ENCODE measurements at regions of chr2 and their contacts with region 1.

Region 1: DNA sequence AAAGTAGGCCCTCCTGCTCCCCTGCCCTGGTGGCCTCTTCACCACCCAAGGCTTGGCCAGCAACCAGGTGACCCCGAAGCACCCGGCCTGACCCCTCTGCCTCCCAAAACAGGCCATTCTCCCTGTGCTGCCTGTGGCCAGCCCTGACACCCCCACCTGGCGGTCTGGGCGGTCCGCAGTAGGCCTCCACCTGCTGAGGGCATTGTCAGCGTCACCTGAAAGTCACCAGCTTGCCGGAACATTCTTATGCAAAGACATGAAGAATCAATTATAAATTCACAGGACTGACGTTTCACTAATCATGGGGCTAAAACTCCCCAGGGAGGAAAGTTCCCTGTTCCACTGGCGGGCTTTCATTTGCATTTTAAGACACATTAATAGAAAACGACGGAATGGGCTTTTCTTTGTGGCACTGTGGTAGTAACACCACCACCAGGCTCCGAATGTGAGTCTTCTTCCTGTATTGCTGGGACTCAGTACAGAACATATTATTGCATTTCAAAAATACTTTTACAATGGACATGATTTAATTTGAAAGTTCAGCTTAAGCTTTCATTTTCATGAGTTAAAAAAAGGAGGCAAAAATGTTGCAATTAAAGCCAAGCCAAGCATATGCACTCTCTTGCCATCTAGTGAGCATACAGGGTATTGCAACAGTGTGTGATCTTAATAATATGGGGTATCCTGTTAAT is 57.4 kb downstream of the ADI1 start:
- DNase-seq: peak; percentile 89
- H3K4me3 ChIP-seq: no peak overlapping the region; a peak in 1 of 4 replicates
- H3K27ac ChIP-seq: peak overlapping the region in 1 of 2 experiments; percentile 43; a peak in 2 of 4 replicates
- H3K4me1 ChIP-seq: peaks cover 16 to 22% of the 10 kb centered on the region in 2 experiments; a peak in 3 of 4 replicates
- H3K27me3 ChIP-seq: no peaks in the 10 kb centered on the region
- CTCF ChIP-seq: peak; percentile 98
- EP300 ChIP-seq: no peak
- RAD21 ChIP-seq: peak; percentile 89

Region 2: GRCh38 chr2:3433339-3433699 is 28.6 kb before region 1 on chr2:
- CTCF ChIA-PET with region 1: interaction called, 132 read pairs
- POLR2A ChIA-PET with region 1: interaction called, 3 read pairs
- DNase-seq: no peak
- H3K4me3 ChIP-seq: no peak overlapping the region
- H3K27ac ChIP-seq: peak overlapping the region in 1 of 2 experiments; percentile 58; a peak in 2 of 4 replicates
- H3K4me1 ChIP-seq: peaks cover 5 to 28% of the 10 kb centered on the region in 2 experiments; a peak in 2 of 4 replicates
- H3K27me3 ChIP-seq: no peaks in the 10 kb centered on the region
- CTCF ChIP-seq: no peak
- EP300 ChIP-seq: no peak
- RAD21 ChIP-seq: no peak

Region 3: DNA sequence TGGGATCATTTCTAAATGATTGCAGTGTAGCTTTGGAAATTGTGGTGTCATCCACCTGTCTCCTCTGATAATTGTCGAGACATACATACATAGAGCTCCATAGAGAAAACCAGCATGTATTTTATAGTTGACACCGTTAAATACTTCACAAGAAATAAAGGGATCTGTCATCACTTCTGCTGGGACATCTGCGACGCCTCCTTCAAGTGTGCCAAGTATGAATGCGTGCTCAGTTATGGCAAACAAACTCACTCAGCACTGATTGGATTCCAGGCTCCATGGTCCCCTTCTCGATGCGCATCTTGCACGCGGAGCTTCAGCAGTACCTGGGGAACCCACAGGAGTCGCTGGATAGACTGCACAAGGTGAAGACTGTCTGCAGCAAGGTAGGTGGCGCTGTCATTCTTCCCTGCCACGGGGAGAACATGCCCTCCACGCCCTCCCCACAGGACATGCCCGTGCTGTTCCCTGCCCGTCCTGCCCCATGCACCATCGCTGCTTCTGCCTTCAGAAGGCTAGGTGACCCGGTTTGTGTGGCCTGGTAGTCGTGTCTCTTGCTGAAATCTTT is 18.4 kb before region 1 on chr2:
- CTCF ChIA-PET with region 1: interaction called, 27 read pairs
- POLR2A ChIA-PET with region 1: no interaction called
- DNase-seq: no peak
- H3K4me3 ChIP-seq: no peak overlapping the region
- H3K27ac ChIP-seq: no peak overlapping the region; a peak in 1 of 4 replicates
- H3K4me1 ChIP-seq: peaks cover 0 to 15% of the 10 kb centered on the region in 2 experiments; a peak in 2 of 4 replicates
- H3K27me3 ChIP-seq: no peaks in the 10 kb centered on the region
- CTCF ChIP-seq: peak; percentile 7; the same call in 1 of the 2 replicates
- EP300 ChIP-seq: no peak
- RAD21 ChIP-seq: no peak

Region 4: GRCh38 chr2:3449086-3449485 is 12.9 kb before region 1 on chr2:
- CTCF ChIA-PET with region 1: interaction called, 27 read pairs
- POLR2A ChIA-PET with region 1: interaction called, 3 read pairs
- DNase-seq: peak; percentile 79
- H3K4me3 ChIP-seq: no peak overlapping the region
- H3K27ac ChIP-seq: peak overlapping the region in 1 of 2 experiments; percentile 94; a peak in 2 of 4 replicates
- H3K4me1 ChIP-seq: peaks cover 0 to 29% of the 10 kb centered on the region in 2 experiments; a peak in 2 of 4 replicates
- H3K27me3 ChIP-seq: no peaks in the 10 kb centered on the region
- CTCF ChIP-seq: no peak
- EP300 ChIP-seq: 0 out of 4 replicates have a peak, but pooled peaks of 1 of the 2 experiments have one; percentile 10
- RAD21 ChIP-seq: no peak

Region 5: DNA sequence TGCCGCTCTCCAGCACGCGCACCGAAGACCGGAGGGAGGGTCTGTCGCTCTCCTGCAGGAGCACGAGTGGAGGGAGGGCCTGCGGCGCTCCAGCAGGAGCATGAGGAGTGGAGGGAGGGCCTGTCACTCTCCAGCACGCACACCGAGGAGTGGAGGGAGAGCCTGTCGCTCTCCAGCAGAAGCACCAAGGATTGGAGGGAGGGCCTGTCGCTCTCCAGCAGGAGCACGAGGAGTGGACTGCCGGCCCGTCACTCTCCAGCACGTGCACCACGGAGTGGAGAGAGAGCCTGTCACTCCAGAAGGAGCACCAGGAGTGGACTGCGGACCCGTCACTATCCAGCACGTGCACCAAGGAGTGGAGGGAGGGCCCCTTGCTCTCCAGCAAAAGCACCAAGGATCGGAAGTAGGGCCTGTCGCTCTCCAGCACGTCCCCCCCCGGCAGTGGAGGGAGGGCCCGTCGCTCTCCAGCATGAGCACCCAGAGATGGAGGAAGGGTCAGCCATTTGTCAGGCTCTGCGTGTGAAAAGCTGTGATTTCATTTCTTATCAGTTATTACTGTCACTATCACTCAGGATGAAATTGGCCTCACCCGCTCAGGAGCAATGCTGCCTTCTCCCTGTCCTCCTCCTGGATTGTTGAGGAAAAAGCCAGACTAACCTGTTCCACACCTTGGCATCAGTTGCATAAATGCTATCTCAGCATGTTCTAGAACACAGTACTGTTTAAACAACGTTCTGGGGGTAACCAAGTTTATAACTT is 21.5 kb after region 1 on chr2:
- CTCF ChIA-PET with region 1: interaction called, 127 read pairs
- POLR2A ChIA-PET with region 1: no interaction called
- DNase-seq: no peak
- H3K4me3 ChIP-seq: no peak overlapping the region
- H3K27ac ChIP-seq: no peak overlapping the region
- H3K4me1 ChIP-seq: no peaks in the 10 kb centered on the region; a peak in 1 of 4 replicates
- H3K27me3 ChIP-seq: no peaks in the 10 kb centered on the region
- CTCF ChIP-seq: no peak
- EP300 ChIP-seq: no peak
- RAD21 ChIP-seq: no peak